AG04450 (cell line): ENCODE measurements at regions of chr5 and their contacts with region 1.

Region 1: DNA sequence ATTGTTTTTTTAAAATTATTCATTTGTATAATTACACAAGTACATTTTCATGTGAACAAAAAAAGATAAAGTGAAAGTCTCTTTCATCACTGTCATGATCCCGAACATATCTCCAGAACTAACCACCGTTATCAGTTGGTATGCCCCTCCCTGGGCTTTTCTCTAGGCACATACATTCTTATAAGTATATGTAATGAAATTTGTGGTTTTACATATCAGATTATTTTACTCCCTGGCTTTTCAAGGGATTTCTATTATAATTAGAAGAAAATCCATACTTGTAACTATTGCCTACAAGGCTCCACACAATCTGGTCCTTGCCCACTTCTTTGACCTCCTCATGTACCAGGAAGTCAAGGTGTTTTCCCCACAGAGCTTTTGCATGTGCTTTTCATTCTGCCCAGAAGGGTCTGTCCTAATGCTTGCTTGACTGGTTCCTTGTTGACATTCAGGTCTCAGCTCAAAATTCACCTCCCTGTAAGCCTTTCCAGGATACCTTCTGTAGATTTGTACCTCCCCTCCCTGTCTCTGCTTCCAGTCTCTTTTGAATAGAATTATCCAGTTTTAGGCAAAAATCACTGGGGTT is 33.7 kb upstream of the HSD17B4 start:
- DNase-seq: no peak
- H3K4me3 ChIP-seq: no peak overlapping the region
- H3K27ac ChIP-seq: peak overlapping the region; percentile 31
- H3K27me3 ChIP-seq: peaks cover 4% of the 10 kb centered on the region
- CTCF ChIP-seq: no peak

Region 2: GRCh38 chr5:119022017-119022745 is 396.4 kb before region 1 on chr5:
- CTCF ChIA-PET with region 1: interaction called, 54 read pairs
- POLR2A ChIA-PET with region 1: no interaction called
- DNase-seq: peak; percentile 15
- H3K4me3 ChIP-seq: no peak overlapping the region
- H3K27ac ChIP-seq: no peak overlapping the region
- H3K27me3 ChIP-seq: no peaks in the 10 kb centered on the region
- CTCF ChIP-seq: peak; percentile 64

Region 3: DNA sequence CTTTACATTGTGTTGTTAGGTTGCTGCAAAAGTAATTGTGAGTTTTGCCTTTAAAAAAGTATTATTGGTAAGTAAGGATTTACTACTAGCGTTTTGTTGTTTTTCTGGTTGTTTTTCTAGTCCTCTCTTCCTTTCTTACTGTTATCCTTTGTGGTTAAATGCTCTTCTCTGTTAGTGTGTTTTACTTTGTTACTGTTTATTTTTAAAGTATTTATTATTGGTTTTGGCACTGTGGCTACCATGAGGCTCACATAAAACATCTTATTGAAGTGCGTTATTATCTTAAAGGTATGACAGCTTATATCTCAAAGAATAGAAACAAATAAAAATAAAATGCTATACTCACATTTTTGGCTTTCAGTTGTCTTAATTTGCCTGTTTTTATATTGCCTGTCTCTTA is 330.2 kb before region 1 on chr5:
- CTCF ChIA-PET with region 1: no interaction called
- POLR2A ChIA-PET with region 1: no interaction called
- DNase-seq: no peak
- H3K4me3 ChIP-seq: no peak overlapping the region
- H3K27ac ChIP-seq: no peak overlapping the region
- H3K27me3 ChIP-seq: no peaks in the 10 kb centered on the region
- CTCF ChIP-seq: no peak

Region 4: DNA sequence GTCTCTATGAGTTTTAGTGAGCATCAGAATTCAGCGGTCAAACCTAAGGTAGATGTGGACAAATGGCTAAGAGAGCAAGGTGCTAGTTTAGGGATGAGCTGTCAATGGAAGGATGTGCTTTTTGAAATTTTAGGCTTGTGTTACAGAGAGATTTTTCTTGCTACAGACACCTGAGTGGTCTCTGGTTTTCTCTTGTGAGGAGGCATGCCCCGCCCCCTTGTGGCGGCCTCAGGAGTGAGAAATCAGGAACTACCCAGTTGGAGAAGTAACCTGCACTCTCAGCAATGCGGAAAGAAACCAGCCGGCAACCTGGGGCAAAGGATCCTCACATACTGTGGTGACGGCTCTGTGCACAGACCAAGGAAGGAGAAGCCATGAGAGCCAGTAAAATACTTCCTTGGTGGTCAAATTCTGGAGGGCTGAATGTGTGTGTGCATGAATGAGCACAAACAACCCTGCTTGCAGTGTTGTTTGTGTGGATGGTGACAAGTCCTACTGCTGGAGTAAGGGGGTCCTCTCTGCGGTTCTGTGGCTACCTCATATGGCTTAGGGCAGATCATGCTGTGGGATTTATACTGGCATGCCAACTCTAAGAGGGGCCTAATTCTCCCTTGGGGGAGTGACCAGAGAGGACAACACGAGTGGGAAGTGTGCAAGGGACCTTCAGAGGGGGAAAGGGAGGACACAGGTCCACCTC is 17.0 kb after region 1 on chr5:
- CTCF ChIA-PET with region 1: interaction called, 31 read pairs
- POLR2A ChIA-PET with region 1: no interaction called
- DNase-seq: peak; percentile 23
- H3K4me3 ChIP-seq: no peak overlapping the region
- H3K27ac ChIP-seq: no peak overlapping the region
- H3K27me3 ChIP-seq: peaks cover 2% of the 10 kb centered on the region
- CTCF ChIP-seq: peak; percentile 83